Activated naive CD4-positive, alpha-beta T cell treated with anti-CD3 and anti-CD28 coated beads for 36 hours (primary cell): ENCODE measurements at regions of chr2 and their contacts with region 1.

Region 1: DNA sequence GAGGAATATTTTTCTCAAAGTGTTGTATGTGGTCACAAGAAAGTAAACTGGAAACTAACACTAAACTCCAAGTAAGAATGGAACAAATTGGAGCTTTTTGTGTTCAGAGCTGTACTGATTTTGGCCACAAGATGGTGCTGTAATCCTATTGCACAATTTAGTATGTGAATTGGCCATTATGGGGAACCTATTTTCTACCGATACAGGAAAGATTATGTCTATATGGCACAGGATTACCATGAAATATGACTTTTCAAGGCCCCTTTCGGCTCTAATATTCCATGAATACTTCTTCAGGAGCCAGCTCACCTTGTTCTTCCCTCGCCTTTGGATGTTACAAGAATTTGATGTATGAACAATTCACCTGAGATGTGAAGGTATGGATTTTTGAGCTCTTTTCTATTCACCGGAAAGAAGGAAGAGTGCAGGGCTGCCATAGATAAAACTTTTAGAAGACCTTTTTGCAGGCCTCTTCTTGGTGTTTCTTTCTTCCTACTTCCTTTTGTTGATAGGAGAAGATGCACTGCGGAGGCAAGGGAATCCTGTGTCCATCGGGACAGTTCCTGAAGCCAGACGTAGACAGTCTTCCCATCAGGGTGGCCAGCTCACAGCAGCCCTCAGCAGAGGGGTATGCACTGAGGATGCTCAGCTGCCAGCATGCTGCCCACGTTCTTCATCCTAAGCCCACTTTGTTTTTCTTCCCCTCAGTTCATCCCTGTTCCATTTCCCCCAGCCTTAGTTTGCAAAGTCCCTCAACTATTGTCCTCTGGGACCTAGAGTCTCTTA is 13.3 kb downstream of the MRPL44 start:
- DNase-seq: peak; percentile 77
- H3K4me3 Mint-ChIP-seq: no peak overlapping the region
- H3K27ac Mint-ChIP-seq: no peak overlapping the region
- H3K4me1 Mint-ChIP-seq: peaks cover 11% of the 10 kb centered on the region
- H3K27me3 Mint-ChIP-seq: no peaks in the 10 kb centered on the region

Region 2: DNA sequence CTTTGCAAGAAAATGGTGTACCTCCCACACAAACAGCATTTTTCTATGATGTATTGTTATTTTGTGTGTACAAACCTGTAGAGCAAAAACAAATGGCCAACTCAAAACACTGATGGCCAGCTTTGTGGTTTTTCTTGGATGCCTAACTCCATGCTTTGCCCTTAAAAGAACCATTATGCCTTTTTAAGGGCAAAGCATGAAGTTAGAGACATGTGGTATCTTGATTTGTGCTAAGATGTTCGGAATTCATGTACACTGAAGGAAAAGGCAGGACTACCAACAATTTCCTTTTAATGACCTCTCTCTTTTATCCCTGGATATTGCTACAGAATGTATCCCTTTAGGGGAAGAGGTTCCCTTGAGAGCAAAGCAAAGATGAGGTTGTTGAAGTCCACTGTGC is 642.0 kb before region 1 on chr2:
- CTCF ChIA-PET with region 1: no interaction called
- intact Hi-C with region 1: no loop called
- DNase-seq: no peak
- H3K4me3 Mint-ChIP-seq: no peak overlapping the region
- H3K27ac Mint-ChIP-seq: no peak overlapping the region
- H3K4me1 Mint-ChIP-seq: no peaks in the 10 kb centered on the region
- H3K27me3 Mint-ChIP-seq: no peaks in the 10 kb centered on the region

Region 3: GRCh38 chr2:223779877-223780276 is 190.7 kb before region 1 on chr2:
- CTCF ChIA-PET with region 1: interaction called, 3 read pairs
- intact Hi-C with region 1: loop called (anchors 1 kb)
- DNase-seq: peak; percentile 61
- H3K4me3 Mint-ChIP-seq: no peak overlapping the region
- H3K27ac Mint-ChIP-seq: no peak overlapping the region
- H3K4me1 Mint-ChIP-seq: no peaks in the 10 kb centered on the region
- H3K27me3 Mint-ChIP-seq: no peaks in the 10 kb centered on the region

Region 4: DNA sequence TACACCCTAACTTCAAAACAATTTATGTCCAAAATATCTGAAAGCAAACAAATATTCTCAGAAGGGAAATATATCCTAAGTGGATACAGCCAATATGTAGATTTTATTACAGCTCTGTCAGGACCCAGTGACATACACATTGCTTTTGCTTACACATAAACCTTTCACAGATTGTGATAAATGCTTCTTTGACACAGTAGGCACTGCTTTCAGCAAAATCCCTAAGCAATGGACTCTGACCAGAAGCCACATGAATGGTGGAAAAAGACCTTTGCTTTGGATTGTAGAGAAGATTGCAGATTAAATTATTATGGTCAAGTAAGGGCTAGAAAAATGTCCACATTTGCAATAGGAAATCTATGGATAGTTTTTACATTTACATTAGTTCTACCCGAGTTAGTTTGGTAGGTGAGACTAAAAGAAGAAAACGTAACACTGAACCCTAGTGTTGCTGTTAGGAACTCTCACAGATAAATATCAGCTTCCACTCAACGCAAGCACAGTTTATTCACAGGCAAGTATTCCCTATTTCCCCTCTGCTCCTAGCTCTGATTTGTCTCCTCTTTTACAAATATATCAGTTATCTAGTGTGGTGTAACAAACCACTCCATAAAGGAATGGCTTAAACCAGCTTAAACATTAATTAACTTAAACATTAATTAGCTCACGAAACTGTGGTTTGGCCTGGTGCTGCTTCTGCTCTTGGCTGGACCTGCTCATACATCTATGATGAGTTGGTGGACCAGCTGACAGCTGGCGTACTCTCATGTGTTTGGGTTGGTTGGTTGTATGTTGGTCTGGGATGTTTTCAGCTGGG is 92.2 kb after region 1 on chr2:
- CTCF ChIA-PET with region 1: interaction called, 19 read pairs
- intact Hi-C with region 1: loop called (anchors 1 kb)
- DNase-seq: no peak
- H3K4me3 Mint-ChIP-seq: no peak overlapping the region
- H3K27ac Mint-ChIP-seq: no peak overlapping the region
- H3K4me1 Mint-ChIP-seq: no peaks in the 10 kb centered on the region
- H3K27me3 Mint-ChIP-seq: no peaks in the 10 kb centered on the region

Region 5: DNA sequence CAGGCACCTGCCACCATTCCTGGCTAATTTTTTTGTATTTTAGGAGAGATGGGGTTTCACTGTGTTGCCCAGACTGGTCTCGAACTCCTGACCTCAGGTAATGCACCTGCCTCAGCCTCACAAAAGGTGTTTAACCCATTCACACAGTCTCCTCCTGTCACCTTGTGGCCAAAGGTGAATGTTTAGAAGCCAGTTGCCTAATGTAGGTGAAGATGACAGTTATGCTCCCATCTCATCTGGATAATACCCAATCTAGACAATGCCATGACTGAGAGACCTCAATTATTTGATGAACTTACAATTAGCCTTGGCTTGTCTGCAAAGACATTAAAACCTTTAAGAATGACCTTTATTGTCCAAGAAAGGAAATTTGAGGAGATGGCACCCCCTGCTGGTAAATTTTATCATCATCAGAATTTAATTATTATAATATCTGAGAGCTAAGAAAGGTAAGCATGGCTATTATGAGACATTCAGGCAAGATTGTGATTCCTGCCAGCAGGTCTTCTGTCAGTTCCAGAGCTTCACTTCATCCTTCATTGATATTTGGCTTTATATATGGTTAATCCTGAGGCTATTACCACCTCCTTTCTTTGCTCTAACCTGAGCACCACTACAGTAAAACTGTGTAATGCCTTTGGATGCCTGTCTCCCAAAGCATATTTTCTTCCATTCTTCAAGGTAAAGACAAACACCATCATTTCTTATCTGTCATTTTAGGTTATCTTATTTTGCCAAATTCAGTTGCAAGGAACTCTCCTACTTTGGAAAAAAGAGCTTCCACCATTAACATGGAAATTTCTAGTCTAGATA is 313.8 kb after region 1 on chr2:
- CTCF ChIA-PET with region 1: interaction called, 187 read pairs
- intact Hi-C with region 1: loop called (anchors 1 kb)
- DNase-seq: peak; percentile 50
- H3K4me3 Mint-ChIP-seq: no peak overlapping the region
- H3K27ac Mint-ChIP-seq: no peak overlapping the region
- H3K4me1 Mint-ChIP-seq: no peaks in the 10 kb centered on the region
- H3K27me3 Mint-ChIP-seq: peaks cover 25% of the 10 kb centered on the region

Region 6: DNA sequence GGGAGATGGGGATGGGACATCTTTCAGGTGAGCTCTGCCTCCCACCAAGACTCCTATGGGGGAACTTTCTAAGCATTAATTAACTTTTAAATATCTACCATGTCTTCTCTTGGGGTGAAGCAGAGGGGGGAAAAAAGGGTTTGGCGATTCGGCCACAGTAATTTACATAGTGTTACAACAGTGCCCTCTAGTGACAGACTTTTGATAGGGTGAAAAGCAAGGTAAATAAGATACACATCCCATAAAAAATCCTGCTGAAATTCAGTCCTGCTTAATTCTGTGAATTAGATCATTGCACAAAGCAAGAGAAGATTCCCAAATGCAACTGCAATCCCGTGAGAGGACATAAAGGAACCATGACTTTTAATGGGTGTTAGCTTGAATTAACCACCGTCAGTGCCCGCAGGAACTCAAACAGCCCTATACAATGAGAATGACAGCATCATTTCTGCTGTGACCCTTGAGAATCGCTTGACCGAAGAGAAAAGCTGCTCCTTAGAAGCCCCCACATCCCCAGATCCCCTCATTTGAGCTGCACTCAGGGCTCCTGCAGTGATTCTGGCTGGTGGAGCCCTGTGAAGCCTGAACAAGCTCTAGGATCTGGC is 398.6 kb after region 1 on chr2:
- CTCF ChIA-PET with region 1: interaction called, 19 read pairs
- intact Hi-C with region 1: loop called (anchors 1 kb)
- DNase-seq: peak; percentile 14
- H3K4me3 Mint-ChIP-seq: no peak overlapping the region
- H3K27ac Mint-ChIP-seq: no peak overlapping the region
- H3K4me1 Mint-ChIP-seq: no peaks in the 10 kb centered on the region
- H3K27me3 Mint-ChIP-seq: no peaks in the 10 kb centered on the region

Region 7: DNA sequence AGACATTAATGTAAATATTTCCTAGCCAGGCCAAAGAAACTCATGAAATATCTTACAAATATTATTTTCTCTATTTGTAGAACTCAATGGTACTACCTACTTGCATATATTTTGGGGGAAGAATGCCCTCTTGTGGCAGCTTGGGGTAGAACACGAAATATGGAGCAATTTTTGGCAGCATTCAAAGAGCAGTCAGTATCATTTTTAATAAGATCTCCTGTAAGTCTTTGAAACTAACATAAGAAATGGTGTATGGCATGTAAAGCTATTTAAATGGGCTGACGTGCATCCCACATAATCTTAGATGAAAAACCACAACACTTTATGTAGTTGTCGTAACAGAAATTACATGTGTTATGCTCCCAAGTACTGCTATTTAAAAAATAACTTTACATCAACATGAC is 807.9 kb after region 1 on chr2:
- CTCF ChIA-PET with region 1: no interaction called
- intact Hi-C with region 1: loop called (anchors 5 kb)
- DNase-seq: peak; percentile 86
- H3K4me3 Mint-ChIP-seq: no peak overlapping the region
- H3K27ac Mint-ChIP-seq: peak overlapping the region; percentile 22
- H3K4me1 Mint-ChIP-seq: peaks cover 5% of the 10 kb centered on the region
- H3K27me3 Mint-ChIP-seq: no peaks in the 10 kb centered on the region